ENCODE measurements at regions of chr15 and their contacts with region 1.

Region 1: GRCh38 chr15:89971592-89971997 is 29.5 kb upstream of the ZNF710 start:
- DNase-seq: peak; percentile 67
- H3K4me3 Mint-ChIP-seq: no peak overlapping the region
- H3K27ac Mint-ChIP-seq: no peak overlapping the region
- H3K4me1 Mint-ChIP-seq: no peaks in the 10 kb centered on the region
- H3K27me3 Mint-ChIP-seq: peaks cover 49% of the 10 kb centered on the region

Region 2: GRCh38 chr15:89893696-89894455 is 77.7 kb before region 1 on chr15 and contains the start of gene AP3S2:
- CTCF ChIA-PET with region 1: interaction called, 15 read pairs
- DNase-seq: peak; percentile 90
- H3K4me3 Mint-ChIP-seq: peak within 1 kb of the TSS; percentile 93
- H3K27ac Mint-ChIP-seq: peak within 1 kb of the TSS; percentile 87
- H3K4me1 Mint-ChIP-seq: peaks cover 45% of the 10 kb centered on the region
- H3K27me3 Mint-ChIP-seq: peaks cover 8% of the 10 kb centered on the region